Gastrocnemius medialis (tissue), 4 donors: ENCODE measurements at regions of chr10 and their contacts with region 1.

Region 1: DNA sequence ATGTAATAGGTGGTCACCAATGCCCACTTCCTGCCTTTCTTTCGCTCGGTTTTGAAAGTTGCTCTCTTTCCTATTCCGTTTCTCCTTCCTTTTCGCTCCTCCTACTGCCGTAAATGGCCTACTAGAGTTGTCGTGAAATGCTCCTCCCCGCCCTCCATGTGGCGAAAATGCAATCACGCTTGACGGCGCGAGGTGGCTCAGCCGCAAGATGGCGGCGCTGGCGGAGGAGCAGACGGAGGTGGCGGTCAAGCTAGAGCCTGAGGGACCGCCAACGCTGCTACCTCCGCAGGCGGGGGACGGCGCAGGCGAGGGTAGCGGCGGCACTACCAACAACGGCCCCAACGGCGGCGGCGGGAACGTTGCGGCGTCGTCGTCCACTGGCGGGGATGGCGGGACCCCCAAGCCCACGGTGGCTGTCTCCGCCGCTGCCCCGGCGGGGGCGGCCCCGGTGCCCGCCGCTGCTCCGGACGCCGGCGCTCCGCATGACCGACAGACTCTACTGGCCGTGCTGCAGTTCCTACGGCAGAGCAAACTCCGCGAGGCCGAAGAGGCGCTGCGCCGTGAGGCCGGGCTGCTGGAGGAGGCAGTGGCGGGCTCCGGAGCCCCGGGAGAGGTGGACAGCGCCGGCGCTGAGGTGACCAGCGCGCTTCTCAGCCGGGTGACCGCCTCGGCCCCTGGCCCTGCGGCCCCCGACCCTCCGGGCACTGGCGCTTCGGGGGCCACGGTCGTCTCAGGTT is at the start of gene TAF5:
- DNase-seq: peak; percentile 87 to 88
- ATAC-seq: peak; percentile 89 to 91
- H3K4me3 ChIP-seq: peak within 1 kb of the TSS; percentile 79 to 86 (median 81)
- H3K27ac ChIP-seq: peak within 1 kb of the TSS; percentile 85 to 91 (median 90)
- H3K4me1 ChIP-seq: peaks cover 23 to 29% of the 10 kb centered on the region in 2 donors
- H3K27me3 ChIP-seq: no peaks in the 10 kb centered on the region
- CTCF ChIP-seq: peak in 1 of 5 experiments; percentile 5
- POLR2A ChIP-seq: peak; percentile 84 to 86
- total RNA-seq, gene TAF5: 4.1 to 6.4 (median 5.2) TPM

Region 2: GRCh38 chr10:102151774-102152544 is 1216.0 kb before region 1 on chr10 and contains the start of gene NOLC1:
- in situ Hi-C with region 1: no loop called
- intact Hi-C with region 1: no loop called
- DNase-seq: peak; percentile 96 to 99
- ATAC-seq: peak; percentile 98 to 99
- H3K4me3 ChIP-seq: peak within 1 kb of the TSS; percentile 75 to 99 (median 92)
- H3K27ac ChIP-seq: peak within 1 kb of the TSS; percentile 82 to 97 (median 94)
- H3K4me1 ChIP-seq: peaks cover 12 to 16% of the 10 kb centered on the region in 2 donors
- H3K27me3 ChIP-seq: no peaks in the 10 kb centered on the region
- CTCF ChIP-seq: peak in 1 of 5 experiments; percentile 24
- POLR2A ChIP-seq: peak; percentile 84 to 90
- total RNA-seq, gene NOLC1: 37.2 to 76.7 (median 71.1) TPM

Region 3: GRCh38 chr10:103102195-103102594 is 265.8 kb before region 1 on chr10:
- in situ Hi-C with region 1: no loop called
- intact Hi-C with region 1: no loop called
- DNase-seq: no peak
- ATAC-seq: peak; percentile 61 to 66
- H3K4me3 ChIP-seq: no peak overlapping the region
- H3K27ac ChIP-seq: peak overlapping the region; percentile 58 to 92 (median 82)
- H3K4me1 ChIP-seq: peaks cover 42 to 48% of the 10 kb centered on the region in 2 donors
- H3K27me3 ChIP-seq: no peaks in the 10 kb centered on the region
- CTCF ChIP-seq: no peak
- POLR2A ChIP-seq: no peak

Region 4: DNA sequence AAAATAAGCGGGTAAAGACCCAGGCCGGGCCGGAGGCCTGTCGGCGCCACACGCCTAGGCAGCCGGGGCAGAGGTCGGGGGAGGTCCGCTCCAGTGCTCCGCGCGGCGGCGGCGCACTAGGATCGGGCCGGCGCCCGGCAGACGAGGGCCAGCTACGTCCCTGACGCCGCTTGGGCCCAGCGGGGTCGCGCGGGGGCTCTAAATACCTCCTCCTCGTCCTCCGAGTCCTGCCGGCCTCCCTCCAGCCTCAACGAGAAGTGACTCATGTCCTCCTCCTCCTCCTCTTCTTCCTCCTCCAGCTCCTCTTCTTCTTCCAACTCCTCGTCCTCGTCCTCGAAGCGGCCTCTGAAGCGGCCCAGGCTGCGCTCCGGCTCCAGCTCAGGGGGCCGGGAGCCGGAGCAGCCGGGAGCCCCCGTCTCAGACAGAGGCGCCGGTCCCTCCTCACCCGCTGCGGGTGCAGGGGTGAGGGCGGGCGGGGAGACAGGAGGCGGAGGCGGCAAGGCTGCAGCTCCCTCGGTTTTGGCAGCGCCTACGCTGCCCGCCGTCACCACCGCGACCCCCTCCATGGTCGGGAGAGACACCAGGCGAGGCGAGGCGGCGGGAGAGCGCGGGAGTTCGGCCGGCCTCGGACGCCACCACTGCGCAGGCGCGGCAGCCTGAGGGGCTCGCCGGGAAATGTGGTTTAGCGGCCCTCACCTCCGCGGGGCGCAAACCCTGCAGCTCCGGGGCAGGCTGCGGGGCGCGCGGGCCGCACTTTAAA is 17.3 kb before region 1 on chr10 and contains the start of gene PCGF6:
- in situ Hi-C with region 1: no loop called
- intact Hi-C with region 1: loop called (anchors 1 kb)
- DNase-seq: peak; percentile 32 to 59
- ATAC-seq: peak; percentile 89 to 93
- H3K4me3 ChIP-seq: peak within 1 kb of the TSS; percentile 76 to 98 (median 92)
- H3K27ac ChIP-seq: peak within 1 kb of the TSS; percentile 79 to 86 (median 82)
- H3K4me1 ChIP-seq: peaks cover 10 to 11% of the 10 kb centered on the region in 2 donors
- H3K27me3 ChIP-seq: no peaks in the 10 kb centered on the region
- CTCF ChIP-seq: peak in 1 of 5 experiments; percentile 6
- POLR2A ChIP-seq: no peak
- total RNA-seq, gene PCGF6: 8.9 to 16.0 (median 12.1) TPM

Region 5: DNA sequence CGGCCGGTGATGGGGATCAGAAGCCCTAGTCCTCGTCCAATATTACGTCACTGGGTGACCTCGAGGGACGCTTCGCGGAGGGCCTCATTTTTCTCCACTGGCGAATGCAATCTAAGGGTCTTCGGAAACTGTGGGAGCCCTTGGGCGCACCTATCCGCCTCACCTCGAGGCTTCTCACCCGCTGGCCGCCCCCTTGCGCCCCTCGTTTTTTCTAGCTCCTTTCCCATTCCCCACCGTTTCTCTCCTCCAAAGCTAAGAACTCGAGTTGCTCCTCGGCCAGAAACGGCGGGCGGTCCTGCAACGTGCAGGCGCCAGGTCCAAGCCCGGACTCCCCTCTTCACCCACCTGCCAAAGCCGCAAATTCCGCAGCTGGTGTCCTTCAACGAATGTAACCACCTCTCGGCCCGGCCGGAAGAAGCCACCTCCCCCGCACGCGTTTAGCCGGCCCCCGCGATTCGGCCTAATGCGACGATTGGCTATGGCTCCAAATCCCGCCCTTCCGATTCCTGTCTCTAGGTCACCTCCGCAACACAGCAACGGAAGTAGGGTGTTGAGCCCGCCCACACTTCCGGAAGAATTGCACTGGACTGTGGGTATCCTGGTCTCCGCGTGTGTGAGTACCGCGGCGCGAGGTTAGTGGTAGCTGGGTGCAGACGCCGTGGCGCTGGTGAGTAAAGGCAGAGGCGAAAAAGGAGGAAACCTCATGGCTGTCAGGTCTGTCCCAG is 28.3 kb after region 1 on chr10 and contains the starts of genes ATP5MK and PDCD11:
- in situ Hi-C with region 1: no loop called
- intact Hi-C with region 1: loop called (anchors 1 kb)
- DNase-seq: peak; percentile 96 to 98
- ATAC-seq: peak; percentile 99 to 100
- H3K4me3 ChIP-seq: peak within 1 kb of the TSS; percentile 88 to 96 (median 94)
- H3K27ac ChIP-seq: peak within 1 kb of the TSS; percentile 91 to 97 (median 94)
- H3K4me1 ChIP-seq: peaks cover 39 to 43% of the 10 kb centered on the region in 2 donors
- H3K27me3 ChIP-seq: no peaks in the 10 kb centered on the region
- CTCF ChIP-seq: peak in 2 of 5 experiments; percentile 12 to 22
- POLR2A ChIP-seq: peak; percentile 65 to 78
- total RNA-seq, gene ATP5MK: 436 to 724 (median 552) TPM
- total RNA-seq, gene PDCD11: 16.7 to 22.7 (median 19.5) TPM

Region 6: GRCh38 chr10:103789771-103790201 is 421.8 kb after region 1 on chr10:
- in situ Hi-C with region 1: no loop called
- intact Hi-C with region 1: no loop called
- DNase-seq: no peak
- ATAC-seq: no peak
- H3K4me3 ChIP-seq: no peak overlapping the region
- H3K27ac ChIP-seq: no peak overlapping the region
- H3K4me1 ChIP-seq: peaks cover 37 to 41% of the 10 kb centered on the region in 2 donors
- H3K27me3 ChIP-seq: no peaks in the 10 kb centered on the region
- CTCF ChIP-seq: no peak
- POLR2A ChIP-seq: no peak